ENCODE measurements at regions of chr20 and their contacts with region 1.

Region 1: GRCh38 chr20:36527331-36528125 is 13.8 kb upstream of the MYL9 start:
- DNase-seq: no peak
- H3K4me3 ChIP-seq: no peak overlapping the region
- H3K27ac ChIP-seq: no peak overlapping the region
- H3K4me1 ChIP-seq: no peaks in the 10 kb centered on the region
- H3K27me3 ChIP-seq: no peaks in the 10 kb centered on the region
- CTCF ChIP-seq: no peak
- EP300 ChIP-seq: no peak
- POLR2A ChIP-seq: no peak
- RAD21 ChIP-seq: no peak

Region 2: DNA sequence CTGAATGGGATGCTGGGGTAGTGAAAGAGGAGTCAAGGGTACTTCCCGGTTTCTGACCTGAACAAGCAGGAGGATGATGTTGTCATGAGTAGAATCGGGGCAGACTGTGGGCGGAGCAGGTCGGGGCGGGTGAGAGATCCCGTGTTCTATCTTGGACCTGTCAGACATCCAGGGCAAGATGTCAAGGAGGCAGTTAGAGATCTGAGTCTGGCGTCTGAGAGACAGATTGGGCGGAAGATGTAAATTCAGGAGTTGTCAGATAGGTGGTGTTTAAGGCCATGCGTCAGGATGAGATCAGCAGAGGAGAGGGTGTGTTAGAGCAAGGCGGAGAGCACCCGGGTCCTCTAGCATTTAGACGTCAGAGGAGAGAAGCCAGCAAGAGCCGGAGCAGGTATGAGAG is 105.9 kb before region 1 on chr20:
- CTCF ChIA-PET with region 1: no interaction called
- POLR2A ChIA-PET with region 1: no interaction called
- DNase-seq: no peak
- H3K4me3 ChIP-seq: no peak overlapping the region
- H3K27ac ChIP-seq: no peak overlapping the region
- H3K4me1 ChIP-seq: no peaks in the 10 kb centered on the region
- H3K27me3 ChIP-seq: no peaks in the 10 kb centered on the region
- CTCF ChIP-seq: no peak
- EP300 ChIP-seq: no peak
- POLR2A ChIP-seq: no peak
- RAD21 ChIP-seq: no peak

Region 3: DNA sequence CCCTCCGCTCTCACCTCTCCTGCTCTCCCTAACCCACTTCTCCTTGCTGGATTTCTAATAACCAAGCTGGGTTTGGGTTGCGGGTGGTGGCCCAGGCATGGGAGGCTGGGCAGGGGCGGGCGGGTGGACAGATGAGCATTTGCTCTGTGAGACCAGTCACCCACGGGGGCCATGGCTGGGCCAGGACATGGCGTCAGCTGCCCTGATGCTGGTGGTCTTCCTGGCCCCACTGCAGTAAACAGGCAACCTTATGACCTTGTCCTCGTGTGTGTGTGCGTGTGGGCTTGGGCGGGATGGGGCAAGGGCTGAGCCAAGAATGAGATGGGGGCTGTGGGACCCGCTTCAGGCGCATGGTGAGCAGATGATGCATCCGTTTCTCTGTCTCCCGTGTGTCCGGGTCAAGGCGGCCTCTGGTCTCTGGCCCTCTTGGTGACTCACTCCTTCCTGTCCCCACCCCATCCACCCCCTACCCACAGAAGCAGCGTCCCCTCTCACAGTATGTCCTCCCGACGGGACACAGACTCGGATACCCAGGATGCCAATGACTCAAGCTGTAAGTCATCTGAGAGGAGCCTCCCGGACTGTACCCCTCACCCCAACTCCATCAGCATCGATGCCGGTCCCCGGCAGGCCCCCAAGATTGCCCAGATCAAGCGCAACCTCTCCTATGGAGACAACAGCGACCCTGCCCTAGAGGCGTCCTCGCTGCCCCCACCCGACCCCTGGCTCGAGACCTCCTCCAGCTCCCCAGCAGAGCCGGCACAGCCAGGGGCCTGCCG is 27.6 kb before region 1 on chr20:
- CTCF ChIA-PET with region 1: no interaction called
- POLR2A ChIA-PET with region 1: no interaction called
- DNase-seq: no peak
- H3K4me3 ChIP-seq: no peak overlapping the region
- H3K27ac ChIP-seq: no peak overlapping the region
- H3K4me1 ChIP-seq: no peaks in the 10 kb centered on the region
- H3K27me3 ChIP-seq: no peaks in the 10 kb centered on the region; a peak in 1 of 7 replicates
- CTCF ChIP-seq: no peak
- EP300 ChIP-seq: no peak
- POLR2A ChIP-seq: no peak
- RAD21 ChIP-seq: no peak

Region 4: GRCh38 chr20:36541227-36541763 is 13.8 kb after region 1 on chr20 and contains the start of gene MYL9:
- CTCF ChIA-PET with region 1: interaction called, 16 read pairs
- POLR2A ChIA-PET with region 1: interaction called, 3 read pairs
- DNase-seq: peak in 1 of 2 experiments; percentile 76
- H3K4me3 ChIP-seq: peak within 1 kb of the TSS; percentile 50 to 88 (median 58)
- H3K27ac ChIP-seq: no peak within 1 kb of the TSS
- H3K4me1 ChIP-seq: peaks cover 0 to 24% (median 19%) of the 10 kb centered on the region in 4 experiments; a peak in 6 of 7 replicates
- H3K27me3 ChIP-seq: no peaks in the 10 kb centered on the region
- CTCF ChIP-seq: no peak
- EP300 ChIP-seq: no peak
- POLR2A ChIP-seq: no peak
- RAD21 ChIP-seq: no peak
- total RNA-seq, gene MYL9: 193 TPM in 2 replicates

Measured in H1 (cell line).